ENCODE measurements at regions of chr16 and their contacts with region 1.

Region 1: DNA sequence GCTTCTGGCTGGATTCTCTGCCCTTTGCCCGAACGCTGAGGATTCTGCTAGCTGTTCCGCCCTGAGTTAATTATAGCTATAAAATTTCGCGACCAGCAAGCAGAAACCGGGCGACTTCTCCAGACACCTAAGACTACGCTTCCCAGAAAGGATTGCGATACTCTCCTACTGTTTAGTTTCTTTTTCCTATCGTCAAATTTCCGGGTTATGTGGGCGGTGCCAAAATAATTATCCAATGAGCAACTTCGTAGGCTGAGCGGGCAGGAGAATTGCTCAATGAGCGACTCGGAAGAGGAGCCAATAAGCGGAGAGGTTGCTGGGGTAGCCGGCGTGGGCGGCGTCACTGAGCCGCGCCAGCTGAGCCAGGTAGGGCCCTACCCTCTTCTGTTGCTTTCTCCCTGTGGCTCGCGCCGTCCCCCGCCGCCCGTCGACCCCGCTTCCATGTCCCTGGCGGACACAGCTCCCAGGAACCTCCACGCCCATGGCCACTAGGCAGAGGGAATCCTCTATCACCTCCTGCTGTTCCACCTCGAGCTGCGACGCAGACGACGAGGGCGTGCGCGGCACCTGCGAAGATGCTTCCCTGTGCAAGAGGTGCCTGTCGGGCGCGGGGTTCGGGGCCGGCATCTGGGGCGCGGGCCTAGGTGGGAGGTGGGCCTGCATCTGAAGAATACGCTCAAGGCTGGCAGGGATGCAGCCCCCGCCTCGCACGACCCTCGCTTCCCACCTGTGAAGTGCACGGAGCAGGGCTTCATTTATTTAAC is at the start of gene LCMT1:
- DNase-seq: peak; percentile 93 to 94
- ATAC-seq: peak; percentile 94
- H3K4me3 ChIP-seq: peak within 1 kb of the TSS; percentile 58 to 84
- H3K27ac ChIP-seq: peak within 1 kb of the TSS in 1 of 2 donors; percentile 74
- H3K4me1 ChIP-seq: peaks cover 0 to 1% of the 10 kb centered on the region in 2 donors
- H3K27me3 ChIP-seq: no peaks in the 10 kb centered on the region
- total RNA-seq, gene LCMT1: 26.7 to 29.9 TPM

Region 2: DNA sequence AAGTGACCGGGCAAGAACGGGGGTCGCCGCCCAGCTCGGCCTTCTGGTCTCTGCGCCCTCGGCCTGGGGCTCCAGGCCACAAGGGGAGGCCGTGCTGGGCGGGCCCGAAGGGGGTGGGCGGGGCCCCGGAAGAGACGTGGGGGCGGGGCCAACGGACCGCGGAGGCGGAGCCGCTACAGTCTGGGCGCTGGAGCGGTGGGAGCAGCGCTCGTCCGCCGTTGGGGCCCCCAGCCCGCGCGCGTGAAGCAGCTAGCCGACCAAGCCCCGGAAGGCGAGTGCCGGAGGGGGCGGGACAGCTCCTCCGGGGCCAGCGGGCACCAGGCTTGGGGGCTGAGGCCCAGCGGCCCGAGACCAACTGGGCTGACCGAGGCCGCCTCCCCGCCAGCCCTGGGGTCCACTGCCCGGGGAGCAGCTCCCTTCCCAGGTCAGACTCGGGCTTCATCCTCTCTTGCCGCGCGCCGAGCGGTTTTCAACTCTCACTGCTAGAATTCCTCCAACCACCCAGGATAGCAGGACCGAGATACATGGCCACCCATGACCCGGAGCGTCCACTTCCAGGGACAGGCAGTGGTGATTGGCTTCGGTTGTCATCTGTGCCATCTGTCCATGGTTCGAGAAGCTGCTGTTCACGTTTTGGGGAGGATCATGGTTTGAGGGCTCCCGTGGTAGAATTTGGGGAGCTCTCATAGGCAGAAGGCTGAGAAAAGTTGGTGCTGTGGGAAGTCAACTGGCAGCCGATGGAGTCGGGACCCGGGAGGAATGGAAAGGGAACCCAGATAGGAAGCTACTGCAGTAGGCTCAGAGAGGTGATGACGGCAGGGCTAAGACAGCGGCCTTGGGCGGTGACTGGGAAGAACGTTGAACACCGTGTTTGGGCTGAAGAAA is 44.6 kb before region 1 on chr16:
- intact Hi-C with region 1: loop called (anchors 5 kb)
- DNase-seq: peak; percentile 90 to 96
- ATAC-seq: peak; percentile 96
- H3K4me3 ChIP-seq: peak overlapping the region; percentile 31 to 54
- H3K27ac ChIP-seq: peak overlapping the region; percentile 91 to 97
- H3K4me1 ChIP-seq: peaks cover 0 to 3% of the 10 kb centered on the region in 2 donors
- H3K27me3 ChIP-seq: no peaks in the 10 kb centered on the region

Measured in aorta (tissue), 5 donors.